KBM-7 (cell line): ENCODE measurements at regions of chr3 and their contacts with region 1.

Region 1: GRCh38 chr3:69143605-69144004 is 21.2 kb upstream of the LMOD3 start:
- DNase-seq: no peak

Region 2: GRCh38 chr3:69671082-69671952 is 527.7 kb after region 1 on chr3:
- in situ Hi-C with region 1: loop called (anchors 25 kb)
- DNase-seq: peak; percentile 73